Activated T-helper 1 cell treated with anti-CD3 and anti-CD28 coated beads, Interleukin-12 subunit alpha, Interleukin-12 subunit beta, Interleukin-2, Interleukin-4 antibody, amounts not matched to agents 30 ng/mL and 10 ng/mL and 1 ng/mL, durations not matched to agents 14 hours and 24 hours and 36 hours (primary cell): ENCODE measurements at regions of chr13 and their contacts with region 1.

Region 1: DNA sequence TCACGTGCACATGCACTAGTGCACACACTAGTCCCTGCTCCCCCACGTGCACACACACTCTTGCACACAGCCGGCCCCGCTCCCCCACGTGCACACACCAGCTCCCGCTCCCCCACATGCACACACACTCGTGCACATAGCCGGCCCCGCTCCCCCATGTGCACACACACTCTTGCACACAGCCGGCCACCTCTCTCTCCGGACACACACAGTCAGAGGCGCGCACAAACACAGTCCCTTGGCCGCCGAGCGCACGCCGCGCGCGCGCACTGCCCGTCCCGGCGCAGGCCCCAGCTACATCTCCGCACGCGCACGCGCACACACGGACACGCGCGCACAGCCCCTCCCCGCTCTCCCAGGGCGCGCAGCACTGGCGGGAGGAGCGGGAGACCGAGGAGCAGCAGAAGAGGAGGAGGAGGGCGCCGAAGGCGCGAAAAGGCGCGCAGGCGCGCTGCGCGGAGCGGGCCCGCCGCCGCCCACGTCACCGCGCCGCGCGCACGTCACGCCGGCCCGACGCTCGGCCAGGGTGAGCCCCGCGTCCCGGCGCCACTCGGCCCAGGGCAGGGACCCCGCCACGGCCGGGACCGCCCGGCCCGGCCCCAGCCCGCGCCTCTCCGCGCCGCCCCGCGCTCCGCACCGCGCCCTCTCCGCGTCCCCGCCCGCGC is at the start of gene TFDP1:
- DNase-seq: peak; percentile 86
- H3K4me3 Mint-ChIP-seq: peak within 1 kb of the TSS; percentile 90
- H3K27ac Mint-ChIP-seq: peak within 1 kb of the TSS; percentile 89
- H3K4me1 Mint-ChIP-seq: peaks cover 36% of the 10 kb centered on the region
- H3K27me3 Mint-ChIP-seq: peaks cover 9% of the 10 kb centered on the region
- total RNA-seq, gene TFDP1: 171 and 173 TPM in 2 replicates

Region 2: GRCh38 chr13:113393563-113394338 is 190.6 kb before region 1 on chr13:
- intact Hi-C with region 1: loop called (anchors 10 kb)
- DNase-seq: peak; percentile 80
- H3K4me3 Mint-ChIP-seq: peak overlapping the region; percentile 89
- H3K27ac Mint-ChIP-seq: peak overlapping the region; percentile 66
- H3K4me1 Mint-ChIP-seq: peaks cover 5% of the 10 kb centered on the region
- H3K27me3 Mint-ChIP-seq: peaks cover 10% of the 10 kb centered on the region

Region 3: DNA sequence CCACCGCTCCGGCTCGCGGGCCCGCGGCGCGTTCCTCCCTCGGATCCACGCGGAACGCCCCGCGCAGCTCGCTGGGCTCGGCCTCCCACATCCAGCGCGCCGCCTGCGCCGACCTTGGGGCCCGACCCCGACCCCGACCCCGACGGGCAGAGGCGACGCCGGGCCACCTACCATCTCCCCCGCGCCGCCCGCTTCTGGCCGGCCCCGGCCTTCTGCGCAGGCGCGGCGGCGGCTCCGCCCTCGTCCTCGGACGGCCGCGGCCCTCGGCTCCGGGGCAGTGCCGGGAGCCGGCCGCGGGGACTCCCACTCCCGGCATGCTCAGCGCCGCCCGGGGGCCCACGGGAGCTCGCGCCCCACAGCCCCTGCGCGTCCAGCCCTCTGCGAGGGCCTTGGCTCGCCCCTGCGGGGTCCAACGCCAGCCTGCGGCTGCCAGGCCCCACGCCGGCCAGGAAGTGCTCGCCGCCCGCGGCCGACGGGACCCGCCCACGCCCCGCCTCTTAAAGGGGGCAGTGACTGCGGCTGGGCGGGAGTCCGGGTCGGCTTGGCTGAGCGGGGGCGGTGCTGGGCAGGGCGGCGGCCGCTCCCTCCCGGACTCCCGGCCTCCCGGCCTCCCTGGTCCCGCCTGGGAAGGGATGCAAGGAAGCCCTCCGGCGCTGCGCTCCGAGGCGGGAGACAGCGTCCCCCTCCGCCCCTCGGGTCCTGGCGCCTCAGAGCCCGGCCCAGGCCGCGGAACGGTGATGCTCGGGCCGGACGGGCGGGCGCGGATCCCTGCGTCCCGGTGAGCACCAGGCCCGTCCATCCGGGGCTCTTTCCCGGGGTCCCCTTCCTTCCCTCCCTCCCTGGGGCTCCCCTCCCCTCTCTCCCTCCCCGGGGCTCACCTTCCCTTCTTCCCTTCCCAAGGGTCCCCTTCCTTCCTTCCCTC is 93.6 kb before region 1 on chr13 and contains the start of gene DCUN1D2:
- intact Hi-C with region 1: loop called (anchors 1 kb)
- DNase-seq: peak; percentile 79
- H3K4me3 Mint-ChIP-seq: peak within 1 kb of the TSS; percentile 90
- H3K27ac Mint-ChIP-seq: peak within 1 kb of the TSS; percentile 78
- H3K4me1 Mint-ChIP-seq: peaks cover 62% of the 10 kb centered on the region
- H3K27me3 Mint-ChIP-seq: peaks cover 3% of the 10 kb centered on the region
- total RNA-seq, gene DCUN1D2: 28.7 and 31.2 TPM in 2 replicates

Region 4: DNA sequence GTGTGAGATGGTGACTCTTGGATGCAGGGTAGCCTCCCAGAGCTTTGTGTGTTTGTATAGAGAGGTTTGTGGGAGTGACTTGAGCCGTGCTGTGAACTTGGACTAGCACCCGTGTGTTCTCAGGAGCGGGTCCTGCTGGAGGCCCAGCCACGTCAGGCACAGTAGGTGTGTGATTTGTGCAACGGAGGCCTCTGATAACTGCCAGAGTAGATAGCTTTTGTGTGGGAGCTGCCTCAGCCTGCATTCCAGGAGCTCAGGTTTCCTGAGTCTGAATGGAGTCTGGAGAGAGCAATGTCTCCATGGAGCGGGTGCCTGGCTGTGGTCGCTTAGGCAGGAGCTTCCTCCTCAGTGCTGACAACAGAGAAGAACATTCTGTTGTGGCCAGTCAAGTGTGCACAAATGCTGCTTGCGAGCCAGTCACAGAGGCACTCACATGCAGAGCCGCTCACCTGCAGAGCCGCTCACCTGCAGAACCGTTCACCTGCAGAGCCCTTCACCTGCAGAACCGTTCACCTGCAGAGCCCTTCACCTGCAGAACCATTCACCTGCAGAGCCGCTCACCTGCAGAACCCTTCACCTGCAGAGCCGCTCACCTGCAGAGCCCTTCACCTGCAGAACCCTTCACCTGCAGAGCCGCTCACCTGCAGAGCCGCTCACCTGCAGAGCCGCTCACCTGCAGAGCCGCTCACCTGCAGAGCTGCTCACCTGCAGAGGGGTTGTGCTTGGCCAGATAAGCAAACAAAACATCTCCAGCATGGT is 32.8 kb after region 1 on chr13:
- intact Hi-C with region 1: no loop called
- DNase-seq: no peak
- H3K4me3 Mint-ChIP-seq: no peak overlapping the region
- H3K27ac Mint-ChIP-seq: no peak overlapping the region
- H3K4me1 Mint-ChIP-seq: peaks cover 15% of the 10 kb centered on the region
- H3K27me3 Mint-ChIP-seq: no peaks in the 10 kb centered on the region